CD4-positive, alpha-beta memory T cell (primary cell): ENCODE measurements at regions of chr10 and their contacts with region 1.

Region 1: GRCh38 chr10:101353692-101354327 is at the start of gene BTRC:
- DNase-seq: peak; percentile 98 to 99 (median 98)
- H3K4me3 ChIP-seq: peak within 1 kb of the TSS; percentile 79 to 89
- H3K4me3 Mint-ChIP-seq: peak within 1 kb of the TSS; percentile 95 to 99 (median 98)
- H3K27ac ChIP-seq: peak within 1 kb of the TSS; percentile 85
- H3K27ac Mint-ChIP-seq: peak within 1 kb of the TSS; percentile 97 to 99 (median 98)
- H3K4me1 ChIP-seq: peaks cover 22% of the 10 kb centered on the region
- H3K4me1 Mint-ChIP-seq: peaks cover 16 to 35% (median 26%) of the 10 kb centered on the region in 4 donors
- H3K27me3 ChIP-seq: no peaks in the 10 kb centered on the region
- H3K27me3 Mint-ChIP-seq: peaks cover 8 to 13% of the 10 kb centered on the region in 2 donors
- total RNA-seq, gene BTRC: 18.7 to 21.3 TPM

Region 2: DNA sequence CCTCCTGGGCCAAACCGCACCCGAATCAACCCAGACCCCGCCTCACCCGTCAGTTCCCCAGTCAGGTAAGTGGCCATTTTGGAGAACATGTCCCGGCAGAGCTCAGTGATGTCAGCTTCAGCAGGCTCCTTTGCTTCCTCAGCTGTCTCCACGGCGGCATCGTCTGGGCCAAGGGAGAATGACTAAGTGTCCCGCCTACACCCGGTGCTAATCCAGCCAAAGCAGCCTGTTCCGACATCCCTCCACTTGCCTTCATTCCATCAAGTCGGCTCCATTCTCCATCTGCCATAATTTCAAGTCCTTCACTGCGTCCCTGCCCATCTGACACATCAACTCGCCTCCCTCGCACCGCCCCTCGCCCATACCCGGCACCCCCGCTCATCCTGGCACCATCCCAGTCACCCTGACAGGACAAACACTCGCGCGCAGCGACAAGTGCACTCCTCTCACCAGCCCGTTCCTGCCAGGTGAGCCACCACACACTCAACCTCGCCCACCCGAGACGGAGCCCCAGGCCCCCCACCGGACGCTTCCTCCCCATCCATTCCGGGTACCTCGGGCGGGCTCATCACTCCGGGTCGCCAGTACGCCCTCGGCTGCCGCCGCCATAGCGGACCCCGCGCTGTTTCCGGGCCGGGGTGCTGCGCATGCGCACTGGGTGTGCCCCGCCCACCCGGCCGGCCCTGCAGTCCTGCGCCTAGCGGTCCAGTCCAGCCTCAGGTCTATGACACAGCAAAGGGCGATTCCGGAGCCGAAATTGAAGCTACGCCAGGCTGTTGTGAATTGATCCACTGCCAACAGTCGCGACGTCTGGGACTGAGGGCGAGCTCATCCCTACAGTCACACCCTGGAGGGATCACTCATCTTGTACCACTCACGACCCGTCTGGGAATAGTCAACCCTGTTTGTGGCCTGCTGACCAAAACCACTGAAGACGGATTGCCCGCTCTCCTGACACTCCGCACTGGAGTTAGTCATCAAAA is 1067.5 kb before region 1 on chr10 and contains the start of gene BLOC1S2:
- CTCF ChIA-PET with region 1: no interaction called
- POLR2A ChIA-PET with region 1: no interaction called
- intact Hi-C with region 1: loop called (anchors 5 kb)
- DNase-seq: peak; percentile 85 to 93 (median 86)
- H3K4me3 ChIP-seq: peak within 1 kb of the TSS; percentile 95 to 96
- H3K4me3 Mint-ChIP-seq: peak within 1 kb of the TSS; percentile 97 to 100 (median 100)
- H3K27ac ChIP-seq: peak within 1 kb of the TSS; percentile 98
- H3K27ac Mint-ChIP-seq: peak within 1 kb of the TSS; percentile 95 to 99 (median 98)
- H3K4me1 ChIP-seq: peaks cover 40% of the 10 kb centered on the region
- H3K4me1 Mint-ChIP-seq: peaks cover 21 to 32% (median 25%) of the 10 kb centered on the region in 4 donors
- H3K27me3 ChIP-seq: no peaks in the 10 kb centered on the region
- H3K27me3 Mint-ChIP-seq: no peaks in the 10 kb centered on the region
- total RNA-seq, gene BLOC1S2: 32.0 to 38.5 TPM

Region 3: GRCh38 chr10:101060036-101060950 is 293.5 kb before region 1 on chr10:
- CTCF ChIA-PET with region 1: no interaction called
- POLR2A ChIA-PET with region 1: no interaction called
- intact Hi-C with region 1: loop called (anchors 10 kb)
- DNase-seq: peak; percentile 80 to 98 (median 94)
- H3K4me3 ChIP-seq: peak overlapping the region; percentile 99 to 100
- H3K4me3 Mint-ChIP-seq: peak overlapping the region; percentile 92 to 98 (median 95)
- H3K27ac ChIP-seq: peak overlapping the region; percentile 92
- H3K27ac Mint-ChIP-seq: peak overlapping the region; percentile 88 to 99 (median 98)
- H3K4me1 ChIP-seq: peaks cover 28% of the 10 kb centered on the region
- H3K4me1 Mint-ChIP-seq: peaks cover 14 to 35% (median 22%) of the 10 kb centered on the region in 4 donors
- H3K27me3 ChIP-seq: peaks cover 23% of the 10 kb centered on the region
- H3K27me3 Mint-ChIP-seq: peaks cover 14 to 17% of the 10 kb centered on the region in 2 donors

Region 4: DNA sequence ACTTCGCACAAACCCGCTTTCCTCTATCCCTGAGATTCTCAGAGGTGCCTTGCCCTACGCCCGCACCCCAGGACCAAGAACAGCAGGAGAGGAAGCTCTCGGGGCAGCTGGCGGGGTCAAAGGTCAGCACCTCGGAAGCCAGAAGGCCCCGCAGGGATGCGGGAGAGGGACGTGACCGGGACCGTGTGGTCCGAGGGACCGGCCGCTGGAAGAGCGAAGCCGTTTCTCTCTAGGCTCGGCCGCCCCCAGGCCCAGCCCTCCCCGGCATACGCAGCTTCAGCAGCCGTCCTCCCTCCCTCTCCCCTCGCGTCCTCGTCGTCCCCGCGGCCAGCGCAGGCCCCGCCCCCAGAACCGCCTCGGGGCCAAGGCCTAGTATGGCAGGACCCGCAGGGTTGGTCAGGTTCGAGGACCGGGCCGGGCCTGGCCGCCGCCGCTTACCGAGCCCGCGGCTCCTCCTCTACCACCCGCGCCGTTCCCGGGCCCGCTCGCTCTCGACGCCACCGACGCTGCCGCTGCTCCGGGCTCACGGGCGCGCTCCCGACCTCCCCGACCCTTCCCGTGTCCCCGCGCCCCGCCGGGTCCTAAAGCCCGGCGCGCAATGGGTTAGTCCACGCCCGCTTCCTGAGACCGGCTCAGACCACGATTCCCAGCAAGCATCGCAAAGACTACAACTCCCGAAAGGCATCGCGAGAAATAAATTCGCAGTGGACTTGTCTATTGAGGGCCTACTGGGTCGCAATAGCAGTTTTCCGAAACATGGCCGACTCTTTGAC is 702.0 kb after region 1 on chr10 and contains the start of gene ARMH3:
- CTCF ChIA-PET with region 1: no interaction called
- POLR2A ChIA-PET with region 1: no interaction called
- intact Hi-C with region 1: loop called (anchors 5 kb)
- DNase-seq: peak; percentile 89 to 92 (median 90)
- H3K4me3 ChIP-seq: peak within 1 kb of the TSS; percentile 89 to 99
- H3K4me3 Mint-ChIP-seq: peak within 1 kb of the TSS; percentile 95 to 98 (median 96)
- H3K27ac ChIP-seq: peak within 1 kb of the TSS; percentile 88
- H3K27ac Mint-ChIP-seq: peak within 1 kb of the TSS; percentile 94 to 99 (median 97)
- H3K4me1 ChIP-seq: peaks cover 51% of the 10 kb centered on the region
- H3K4me1 Mint-ChIP-seq: peaks cover 31 to 54% (median 42%) of the 10 kb centered on the region in 4 donors
- H3K27me3 ChIP-seq: no peaks in the 10 kb centered on the region
- H3K27me3 Mint-ChIP-seq: no peaks in the 10 kb centered on the region
- total RNA-seq, gene ARMH3: 31.4 to 31.8 TPM

Region 5: GRCh38 chr10:102245101-102245931 is 891.5 kb after region 1 on chr10 and contains the start of gene GBF1:
- CTCF ChIA-PET with region 1: no interaction called
- POLR2A ChIA-PET with region 1: no interaction called
- intact Hi-C with region 1: loop called (anchors 2 kb)
- DNase-seq: peak; percentile 95 to 98 (median 96)
- H3K4me3 ChIP-seq: peak within 1 kb of the TSS; percentile 51 to 94
- H3K4me3 Mint-ChIP-seq: peak within 1 kb of the TSS; percentile 84 to 99 (median 98)
- H3K27ac ChIP-seq: peak within 1 kb of the TSS; percentile 96
- H3K27ac Mint-ChIP-seq: peak within 1 kb of the TSS; percentile 89 to 98 (median 97)
- H3K4me1 ChIP-seq: peaks cover 64% of the 10 kb centered on the region
- H3K4me1 Mint-ChIP-seq: peaks cover 38 to 66% (median 50%) of the 10 kb centered on the region in 4 donors
- H3K27me3 ChIP-seq: peaks cover 6% of the 10 kb centered on the region
- H3K27me3 Mint-ChIP-seq: peaks cover 3 to 16% of the 10 kb centered on the region in 2 donors
- total RNA-seq, gene GBF1: 39.6 to 44.7 TPM